Activated CD8-positive, alpha-beta T cell treated with anti-CD3 and anti-CD28 coated beads, Interleukin-2, amount 10 ng/mL, durations not matched to agents 7 days and 5 days (primary cell): ENCODE measurements at regions of chr22 and their contacts with region 1.

Region 1: GRCh38 chr22:22463855-22464540 is 44.5 kb downstream of the ZNF280B start:
- DNase-seq: peak; percentile 70
- ATAC-seq: peak; percentile 68
- H3K4me3 Mint-ChIP-seq: no peak overlapping the region
- H3K27ac Mint-ChIP-seq: no peak overlapping the region
- H3K4me1 Mint-ChIP-seq: no peaks in the 10 kb centered on the region
- H3K27me3 Mint-ChIP-seq: peaks cover 27% of the 10 kb centered on the region

Region 2: GRCh38 chr22:22397277-22397870 is 66.6 kb before region 1 on chr22:
- CTCF ChIA-PET with region 1: no interaction called
- POLR2A ChIA-PET with region 1: no interaction called
- DNase-seq: no peak
- ATAC-seq: no peak
- H3K4me3 Mint-ChIP-seq: no peak overlapping the region
- H3K27ac Mint-ChIP-seq: no peak overlapping the region
- H3K4me1 Mint-ChIP-seq: no peaks in the 10 kb centered on the region
- H3K27me3 Mint-ChIP-seq: peaks cover 21% of the 10 kb centered on the region

Region 3: DNA sequence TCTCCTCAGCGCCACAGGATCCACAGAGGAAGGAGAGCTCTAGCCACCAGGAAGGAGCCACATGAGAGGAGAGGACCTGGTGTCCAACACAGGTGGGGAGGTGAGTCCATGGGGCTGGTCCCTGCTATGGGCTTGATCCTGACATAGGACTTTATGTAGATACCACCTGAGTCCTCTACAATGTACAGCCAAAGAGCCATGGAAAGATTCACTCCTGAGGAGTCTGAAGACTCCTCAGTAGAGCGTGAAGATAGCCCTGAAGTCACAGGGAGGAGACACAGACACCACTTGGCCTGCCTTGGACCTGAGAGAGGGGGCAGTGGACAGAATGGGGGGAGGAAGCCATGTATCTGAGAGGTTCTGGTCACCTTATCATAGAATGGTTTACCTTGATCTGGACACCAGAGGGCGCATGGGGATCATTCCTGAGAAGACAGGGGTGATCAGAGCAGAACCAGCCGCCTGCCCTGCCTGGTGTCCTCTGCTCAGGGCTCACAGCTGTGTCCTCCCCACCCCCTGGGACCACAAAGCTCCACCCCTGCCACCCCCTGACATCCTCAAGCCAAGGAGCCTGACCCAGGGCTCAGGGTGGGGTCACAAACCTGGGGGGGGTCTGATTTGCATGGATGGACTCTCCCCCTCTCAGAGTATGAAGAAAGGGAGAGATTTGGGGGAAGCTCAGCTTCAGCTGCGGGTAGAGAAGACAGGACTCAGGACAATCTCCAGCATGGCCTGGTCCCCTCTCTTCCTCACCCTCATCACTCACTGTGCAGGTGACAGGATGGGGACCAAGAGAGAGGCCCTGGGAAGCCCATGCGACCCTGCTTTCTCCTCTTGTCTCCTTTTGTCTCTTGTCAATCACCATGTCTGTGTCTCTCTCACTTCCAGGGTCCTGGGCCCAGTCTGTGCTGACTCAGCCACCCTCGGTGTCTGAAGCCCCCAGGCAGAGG is 32.5 kb before region 1 on chr22:
- CTCF ChIA-PET with region 1: interaction called, 12 read pairs
- POLR2A ChIA-PET with region 1: no interaction called
- DNase-seq: peak; percentile 76
- ATAC-seq: peak; percentile 92
- H3K4me3 Mint-ChIP-seq: no peak overlapping the region
- H3K27ac Mint-ChIP-seq: no peak overlapping the region
- H3K4me1 Mint-ChIP-seq: no peaks in the 10 kb centered on the region
- H3K27me3 Mint-ChIP-seq: peaks cover 23% of the 10 kb centered on the region

Region 4: DNA sequence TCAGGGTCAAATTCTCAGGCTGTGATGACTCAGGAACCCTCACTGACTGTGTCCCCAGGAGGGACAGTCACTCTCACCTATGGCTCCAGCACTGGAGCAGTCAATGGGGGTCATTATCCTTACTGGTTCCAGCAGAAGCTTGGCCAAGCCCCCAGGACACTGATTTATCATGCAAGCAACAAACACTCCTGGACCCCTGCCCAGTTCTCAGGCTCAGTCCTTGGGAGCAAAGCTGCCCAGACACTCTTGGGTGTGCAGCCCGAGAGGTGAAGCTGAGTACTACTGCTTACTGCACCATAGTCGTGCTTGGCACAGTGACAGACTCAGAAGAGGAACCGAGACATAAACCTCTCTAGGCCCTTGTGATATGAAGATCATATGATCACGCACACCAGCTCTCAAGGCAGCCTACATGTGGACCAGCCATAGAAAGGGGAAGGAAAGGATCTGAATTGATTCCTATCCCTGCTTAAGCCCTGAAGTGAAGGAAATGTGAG is 13.6 kb before region 1 on chr22:
- CTCF ChIA-PET with region 1: interaction called, 11 read pairs
- POLR2A ChIA-PET with region 1: no interaction called
- DNase-seq: no peak
- ATAC-seq: no peak
- H3K4me3 Mint-ChIP-seq: no peak overlapping the region
- H3K27ac Mint-ChIP-seq: no peak overlapping the region
- H3K4me1 Mint-ChIP-seq: peaks cover 4% of the 10 kb centered on the region
- H3K27me3 Mint-ChIP-seq: peaks cover 42% of the 10 kb centered on the region

Region 5: DNA sequence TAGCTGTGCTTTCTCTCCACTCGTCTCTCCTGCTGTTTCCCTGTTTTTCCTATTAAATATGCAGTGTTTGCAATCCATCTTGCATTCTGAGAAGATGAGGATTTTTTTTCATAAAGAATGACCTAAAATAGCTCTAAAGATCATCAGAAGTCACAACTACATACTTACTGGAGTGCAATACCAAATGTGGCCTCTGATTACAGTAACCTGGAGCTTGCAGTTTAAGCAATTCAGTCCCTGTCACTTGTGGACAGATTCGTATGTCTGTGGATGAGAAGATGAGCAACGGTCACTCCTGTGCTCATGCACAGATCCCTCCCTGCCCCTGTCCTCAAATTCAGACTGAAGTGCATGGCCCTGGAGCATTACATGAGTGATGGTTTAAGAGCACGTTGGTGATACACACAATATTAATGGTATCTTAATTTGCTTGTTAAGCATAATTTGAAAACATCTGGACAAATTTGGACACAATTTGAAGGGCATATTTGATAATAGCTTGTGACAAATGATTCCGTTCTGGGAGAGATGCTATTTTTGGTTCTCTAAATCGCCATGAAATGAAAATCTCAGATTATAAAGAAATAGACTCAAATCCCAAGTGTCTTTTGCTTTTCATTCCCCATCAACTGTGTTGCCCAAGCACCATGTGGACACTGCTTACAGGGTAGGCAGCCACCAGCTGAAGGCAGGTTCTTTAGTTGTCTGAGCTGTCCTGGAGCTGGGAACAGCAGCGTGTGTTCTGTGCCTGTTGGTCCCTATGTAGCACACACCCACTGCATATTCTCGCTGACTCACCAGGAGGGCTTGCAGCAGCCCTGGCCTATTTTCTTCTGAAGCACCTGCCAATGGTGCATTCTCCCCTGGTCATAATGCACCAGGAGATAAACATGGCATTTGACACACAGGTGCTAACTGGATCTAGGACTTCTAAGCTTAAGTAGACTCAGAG is 127.6 kb after region 1 on chr22:
- CTCF ChIA-PET with region 1: interaction called, 26 read pairs
- POLR2A ChIA-PET with region 1: no interaction called
- DNase-seq: no peak
- ATAC-seq: no peak
- H3K4me3 Mint-ChIP-seq: no peak overlapping the region
- H3K27ac Mint-ChIP-seq: no peak overlapping the region
- H3K4me1 Mint-ChIP-seq: no peaks in the 10 kb centered on the region
- H3K27me3 Mint-ChIP-seq: peaks cover 16% of the 10 kb centered on the region